ENCODE measurements at regions of chr2 and their contacts with region 1.

Region 1: GRCh38 chr2:61993444-61994024 is 88.1 kb downstream of the COMMD1 start:
- DNase-seq: peak; percentile 55
- ATAC-seq: peak; percentile 76
- H3K4me3 ChIP-seq: no peak overlapping the region
- H3K27ac ChIP-seq: no peak overlapping the region
- H3K4me1 ChIP-seq: peaks cover 26% of the 10 kb centered on the region
- H3K27me3 ChIP-seq: no peaks in the 10 kb centered on the region
- CTCF ChIP-seq: peak; percentile 74 to 87 (median 84)
- EP300 ChIP-seq: no peak
- POLR2A ChIP-seq: no peak
- RAD21 ChIP-seq: peak; percentile 91

Region 2: DNA sequence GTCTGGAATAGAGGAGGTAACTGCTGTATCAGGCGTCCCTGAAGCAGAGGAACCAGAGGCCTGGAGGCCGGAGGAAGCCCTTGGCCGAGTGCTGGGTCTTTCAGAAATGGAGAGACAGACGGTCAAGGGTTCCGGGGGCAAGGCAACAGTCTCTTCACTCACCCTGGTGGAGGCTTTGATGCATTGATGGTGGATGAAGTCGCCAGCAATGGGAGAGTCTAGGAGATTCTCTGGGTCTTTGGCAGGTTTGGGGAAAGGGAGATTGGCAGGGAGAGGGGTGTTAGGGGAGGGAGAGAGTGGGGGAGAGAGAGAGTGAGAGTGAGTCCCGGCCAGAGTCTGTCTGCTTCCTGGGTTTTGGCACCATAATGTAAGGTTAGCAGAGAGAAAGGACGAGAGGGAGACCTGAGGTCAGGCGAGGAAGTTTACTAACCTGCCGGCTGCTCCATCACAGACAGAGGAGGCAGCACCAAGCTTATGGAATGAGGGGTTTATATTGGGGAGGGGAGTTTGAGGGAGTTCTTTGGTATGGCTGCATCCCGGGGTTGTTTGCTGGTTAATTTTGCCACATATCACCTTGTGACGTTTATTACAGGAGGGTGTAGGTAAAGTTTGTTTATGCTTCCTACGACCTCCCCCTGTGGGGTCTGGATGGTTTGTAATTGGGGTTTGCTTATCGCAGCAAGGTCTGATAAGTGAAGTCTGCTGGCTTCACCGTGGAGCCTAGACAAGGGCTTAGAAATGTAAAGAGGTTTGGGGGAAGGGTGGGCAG is 68.5 kb before region 1 on chr2:
- CTCF ChIA-PET with region 1: interaction called, 21 read pairs
- POLR2A ChIA-PET with region 1: no interaction called
- RAD21 ChIA-PET with region 1: interaction called, 3 read pairs
- SMC1A ChIA-PET with region 1: interaction called, 3 read pairs
- in situ Hi-C with region 1: no loop called
- intact Hi-C with region 1: no loop called
- DNase-seq: no peak
- ATAC-seq: no peak
- H3K4me3 ChIP-seq: no peak overlapping the region
- H3K27ac ChIP-seq: no peak overlapping the region
- H3K4me1 ChIP-seq: no peaks in the 10 kb centered on the region
- H3K27me3 ChIP-seq: no peaks in the 10 kb centered on the region
- CTCF ChIP-seq: no peak
- EP300 ChIP-seq: no peak
- POLR2A ChIP-seq: no peak
- RAD21 ChIP-seq: no peak

Region 3: GRCh38 chr2:62038975-62039771 is 45.6 kb after region 1 on chr2:
- CTCF ChIA-PET with region 1: interaction called, 5 read pairs
- POLR2A ChIA-PET with region 1: interaction called, 3 read pairs
- RAD21 ChIA-PET with region 1: interaction called, 43 read pairs
- SMC1A ChIA-PET with region 1: interaction called, 58 read pairs
- in situ Hi-C with region 1: no loop called
- intact Hi-C with region 1: no loop called
- DNase-seq: peak; percentile 98
- ATAC-seq: peak; percentile 99
- H3K4me3 ChIP-seq: peak overlapping the region; percentile 16; the same call in 1 of the 2 replicates
- H3K27ac ChIP-seq: peak overlapping the region; percentile 71
- H3K4me1 ChIP-seq: peaks cover 25% of the 10 kb centered on the region
- H3K27me3 ChIP-seq: no peaks in the 10 kb centered on the region
- CTCF ChIP-seq: no peak
- EP300 ChIP-seq: peak; percentile 91 to 100
- POLR2A ChIP-seq: no peak
- RAD21 ChIP-seq: peak; percentile 33; the same call in 1 of the 2 replicates

Region 4: GRCh38 chr2:62133320-62133823 is 139.8 kb after region 1 on chr2:
- CTCF ChIA-PET with region 1: interaction called, 5 read pairs
- POLR2A ChIA-PET with region 1: no interaction called
- RAD21 ChIA-PET with region 1: interaction called, 83 read pairs
- SMC1A ChIA-PET with region 1: interaction called, 12 read pairs
- in situ Hi-C with region 1: no loop called
- intact Hi-C with region 1: no loop called
- DNase-seq: no peak
- ATAC-seq: no peak
- H3K4me3 ChIP-seq: no peak overlapping the region
- H3K27ac ChIP-seq: peak overlapping the region; percentile 41
- H3K4me1 ChIP-seq: peaks cover 44% of the 10 kb centered on the region
- H3K27me3 ChIP-seq: no peaks in the 10 kb centered on the region
- CTCF ChIP-seq: no peak
- EP300 ChIP-seq: no peak
- POLR2A ChIP-seq: no peak
- RAD21 ChIP-seq: no peak

Region 5: DNA sequence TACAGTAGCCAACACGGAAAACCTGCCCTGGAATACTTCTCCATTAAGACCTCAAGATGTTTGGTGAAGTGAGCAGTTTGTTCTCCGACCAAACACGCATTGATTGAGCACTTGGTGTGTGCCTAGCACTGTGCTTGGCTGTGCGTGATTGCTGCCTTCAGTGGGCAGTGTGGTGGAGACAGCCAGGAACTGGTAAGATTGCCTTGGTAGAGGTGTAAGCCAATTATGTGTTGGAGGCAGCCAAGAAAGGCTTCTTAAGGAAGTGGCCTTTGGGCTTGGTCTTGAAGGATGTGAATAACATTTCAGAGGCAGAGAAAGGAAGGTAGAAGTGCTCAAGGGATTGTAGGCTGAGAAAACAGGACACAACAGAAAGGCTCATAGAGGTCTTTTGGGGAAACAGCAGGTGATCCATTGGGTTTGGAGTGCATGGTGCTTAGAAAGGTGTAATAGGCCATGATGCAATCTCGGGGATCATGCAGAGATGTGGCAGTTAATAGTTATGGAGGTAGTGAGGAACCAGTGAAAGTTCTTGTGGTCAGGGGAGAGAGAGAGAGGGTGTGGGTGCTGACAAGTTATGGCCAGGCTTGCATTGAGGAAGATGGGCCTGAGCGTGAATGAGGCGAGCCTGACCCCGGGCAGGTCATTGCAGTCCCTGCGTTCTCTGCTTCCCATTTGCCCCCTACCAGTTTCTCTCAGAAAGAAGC is 208.6 kb after region 1 on chr2:
- CTCF ChIA-PET with region 1: interaction called, 9 read pairs
- POLR2A ChIA-PET with region 1: interaction called, 5 read pairs
- RAD21 ChIA-PET with region 1: interaction called, 63 read pairs
- SMC1A ChIA-PET with region 1: interaction called, 28 read pairs
- in situ Hi-C with region 1: loop called (anchors 10 kb)
- intact Hi-C with region 1: loop called (anchors 2 kb)
- DNase-seq: no peak
- ATAC-seq: peak; percentile 62
- H3K4me3 ChIP-seq: peak overlapping the region; percentile 86
- H3K27ac ChIP-seq: peak overlapping the region; percentile 89
- H3K4me1 ChIP-seq: peaks cover 26% of the 10 kb centered on the region
- H3K27me3 ChIP-seq: no peaks in the 10 kb centered on the region
- CTCF ChIP-seq: no peak
- EP300 ChIP-seq: 0 out of 4 replicates have a peak, but pooled peaks of 1 of the 2 experiments have one; percentile 31
- POLR2A ChIP-seq: peak; percentile 65
- RAD21 ChIP-seq: no peak

Region 6: GRCh38 chr2:62340994-62341484 is 347.5 kb after region 1 on chr2:
- CTCF ChIA-PET with region 1: interaction called, 5 read pairs
- POLR2A ChIA-PET with region 1: no interaction called
- RAD21 ChIA-PET with region 1: interaction called, 6 read pairs
- SMC1A ChIA-PET with region 1: interaction called, 3 read pairs
- in situ Hi-C with region 1: no loop called
- intact Hi-C with region 1: loop called (anchors 10 kb)
- DNase-seq: peak; percentile 85
- ATAC-seq: peak; percentile 84
- H3K4me3 ChIP-seq: no peak overlapping the region
- H3K27ac ChIP-seq: peak overlapping the region; percentile 77
- H3K4me1 ChIP-seq: peaks cover 50% of the 10 kb centered on the region
- H3K27me3 ChIP-seq: no peaks in the 10 kb centered on the region
- CTCF ChIP-seq: no peak
- EP300 ChIP-seq: peak; percentile 15 to 43; a peak in 2 of 4 replicates
- POLR2A ChIP-seq: no peak; the same call in 1 of the 2 replicates
- RAD21 ChIP-seq: 0 out of 2 replicates have a peak, but pooled peaks have one; percentile 14